Activated CD4-positive, alpha-beta T cell treated with anti-CD3 and anti-CD28 coated beads, Interleukin-2, amount 10 ng/mL, durations not matched to agents 24 days and 14 days (primary cell): ENCODE measurements at regions of chr11 and their contacts with region 1.

Region 1: GRCh38 chr11:18321980-18322711 is at the starts of genes GTF2H1 and HPS5:
- DNase-seq: peak; percentile 99
- H3K4me3 Mint-ChIP-seq: peak within 1 kb of the TSS; percentile 94
- H3K27ac Mint-ChIP-seq: peak within 1 kb of the TSS; percentile 99
- H3K4me1 Mint-ChIP-seq: peaks cover 55% of the 10 kb centered on the region
- H3K27me3 Mint-ChIP-seq: no peaks in the 10 kb centered on the region
- total RNA-seq, gene GTF2H1: 54.6 and 55.7 TPM in 2 replicates
- total RNA-seq, gene HPS5: 20.5 and 24.5 TPM in 2 replicates

Region 2: GRCh38 chr11:18105802-18106574 is 216.2 kb before region 1 on chr11 and contains the start of gene SAAL1:
- intact Hi-C with region 1: loop called (anchors 2 kb)
- DNase-seq: peak; percentile 98
- H3K4me3 Mint-ChIP-seq: peak within 1 kb of the TSS; percentile 91
- H3K27ac Mint-ChIP-seq: peak within 1 kb of the TSS; percentile 89
- H3K4me1 Mint-ChIP-seq: peaks cover 26% of the 10 kb centered on the region
- H3K27me3 Mint-ChIP-seq: peaks cover 12% of the 10 kb centered on the region
- total RNA-seq, gene SAAL1: 40.1 and 43.5 TPM in 2 replicates

Region 3: GRCh38 chr11:18383388-18384156 is 61.4 kb after region 1 on chr11:
- intact Hi-C with region 1: loop called (anchors 1 kb)
- DNase-seq: peak; percentile 90
- H3K4me3 Mint-ChIP-seq: peak overlapping the region; percentile 85
- H3K27ac Mint-ChIP-seq: peak overlapping the region; percentile 100
- H3K4me1 Mint-ChIP-seq: peaks cover 37% of the 10 kb centered on the region
- H3K27me3 Mint-ChIP-seq: no peaks in the 10 kb centered on the region

Region 4: DNA sequence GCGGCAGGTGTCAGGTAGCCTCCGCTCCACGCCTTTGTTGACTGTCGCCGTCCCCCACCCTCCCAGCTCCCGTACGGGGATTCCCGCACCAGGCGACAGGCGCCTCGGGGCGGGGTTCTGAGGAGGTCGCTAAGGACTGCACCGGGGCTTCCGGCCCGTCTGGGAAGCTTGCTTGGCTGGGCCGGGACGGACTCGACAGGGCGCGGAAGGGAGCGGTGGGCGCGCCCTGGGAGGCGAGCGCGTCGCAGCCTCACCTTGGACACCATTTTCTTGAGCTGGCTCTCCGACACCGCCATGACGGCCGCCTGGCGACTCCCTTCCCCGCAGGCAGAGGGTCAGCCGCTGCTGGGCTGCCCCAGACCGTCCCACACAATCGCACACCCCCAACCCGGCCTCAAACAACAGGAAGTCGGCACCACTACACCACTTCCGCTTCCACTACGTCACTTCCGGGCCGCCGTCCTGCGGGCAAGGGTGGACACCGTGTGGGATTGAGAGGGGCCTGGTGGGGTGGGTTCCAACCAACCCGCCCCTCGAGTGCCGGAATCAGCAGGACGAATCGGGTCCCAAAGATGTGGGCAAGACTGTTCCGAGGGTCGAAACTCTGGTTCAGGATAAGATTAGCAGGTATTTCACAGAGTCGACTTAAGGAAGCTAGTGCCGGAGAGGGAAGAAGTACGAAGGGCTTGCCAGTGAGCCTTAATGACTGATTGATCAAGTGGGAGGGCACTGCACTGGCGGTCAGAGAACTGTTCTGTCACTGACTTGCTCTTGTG is 204.6 kb after region 1 on chr11 and contains the start of gene TSG101:
- intact Hi-C with region 1: loop called (anchors 1 kb)
- DNase-seq: peak; percentile 98
- H3K4me3 Mint-ChIP-seq: peak within 1 kb of the TSS; percentile 99
- H3K27ac Mint-ChIP-seq: peak within 1 kb of the TSS; percentile 100
- H3K4me1 Mint-ChIP-seq: peaks cover 29% of the 10 kb centered on the region
- H3K27me3 Mint-ChIP-seq: no peaks in the 10 kb centered on the region
- total RNA-seq, gene TSG101: 39.6 and 43.5 TPM in 2 replicates

Region 5: GRCh38 chr11:18615628-18616392 is 293.7 kb after region 1 on chr11:
- intact Hi-C with region 1: loop called (anchors 5 kb)
- DNase-seq: no peak
- H3K4me3 Mint-ChIP-seq: peak overlapping the region; percentile 77
- H3K27ac Mint-ChIP-seq: peak overlapping the region; percentile 85
- H3K4me1 Mint-ChIP-seq: peaks cover 44% of the 10 kb centered on the region
- H3K27me3 Mint-ChIP-seq: no peaks in the 10 kb centered on the region